ENCODE measurements at regions of chr4 and their contacts with region 1.

Region 1: GRCh38 chr4:53702334-53703266 is 111.3 kb upstream of the LNX1 start:
- DNase-seq: peak; percentile 20
- ATAC-seq: peak; percentile 87
- H3K4me3 Mint-ChIP-seq: no peak overlapping the region
- H3K27ac Mint-ChIP-seq: no peak overlapping the region
- H3K4me1 Mint-ChIP-seq: peaks cover 17% of the 10 kb centered on the region
- H3K27me3 Mint-ChIP-seq: no peaks in the 10 kb centered on the region
- CTCF ChIP-seq: no peak

Region 2: GRCh38 chr4:53714236-53715140 is 11.9 kb after region 1 on chr4:
- CTCF ChIA-PET with region 1: interaction called, 10 read pairs
- POLR2A ChIA-PET with region 1: no interaction called
- DNase-seq: no peak
- ATAC-seq: no peak
- H3K4me3 Mint-ChIP-seq: no peak overlapping the region
- H3K27ac Mint-ChIP-seq: no peak overlapping the region
- H3K4me1 Mint-ChIP-seq: peaks cover 15% of the 10 kb centered on the region
- H3K27me3 Mint-ChIP-seq: no peaks in the 10 kb centered on the region
- CTCF ChIP-seq: no peak

Region 3: GRCh38 chr4:53804719-53805118 is 102.1 kb after region 1 on chr4:
- CTCF ChIA-PET with region 1: interaction called, 29 read pairs
- POLR2A ChIA-PET with region 1: no interaction called
- DNase-seq: peak; percentile 72
- ATAC-seq: peak; percentile 82
- H3K4me3 Mint-ChIP-seq: no peak overlapping the region
- H3K27ac Mint-ChIP-seq: no peak overlapping the region
- H3K4me1 Mint-ChIP-seq: no peaks in the 10 kb centered on the region
- H3K27me3 Mint-ChIP-seq: no peaks in the 10 kb centered on the region
- CTCF ChIP-seq: peak; percentile 28; the same call in 1 of the 2 replicates